Activated CD8-positive, alpha-beta T cell treated with anti-CD3 and anti-CD28 coated beads for 36 hours (primary cell): ENCODE measurements at regions of chr1 and their contacts with region 1.

Region 1: DNA sequence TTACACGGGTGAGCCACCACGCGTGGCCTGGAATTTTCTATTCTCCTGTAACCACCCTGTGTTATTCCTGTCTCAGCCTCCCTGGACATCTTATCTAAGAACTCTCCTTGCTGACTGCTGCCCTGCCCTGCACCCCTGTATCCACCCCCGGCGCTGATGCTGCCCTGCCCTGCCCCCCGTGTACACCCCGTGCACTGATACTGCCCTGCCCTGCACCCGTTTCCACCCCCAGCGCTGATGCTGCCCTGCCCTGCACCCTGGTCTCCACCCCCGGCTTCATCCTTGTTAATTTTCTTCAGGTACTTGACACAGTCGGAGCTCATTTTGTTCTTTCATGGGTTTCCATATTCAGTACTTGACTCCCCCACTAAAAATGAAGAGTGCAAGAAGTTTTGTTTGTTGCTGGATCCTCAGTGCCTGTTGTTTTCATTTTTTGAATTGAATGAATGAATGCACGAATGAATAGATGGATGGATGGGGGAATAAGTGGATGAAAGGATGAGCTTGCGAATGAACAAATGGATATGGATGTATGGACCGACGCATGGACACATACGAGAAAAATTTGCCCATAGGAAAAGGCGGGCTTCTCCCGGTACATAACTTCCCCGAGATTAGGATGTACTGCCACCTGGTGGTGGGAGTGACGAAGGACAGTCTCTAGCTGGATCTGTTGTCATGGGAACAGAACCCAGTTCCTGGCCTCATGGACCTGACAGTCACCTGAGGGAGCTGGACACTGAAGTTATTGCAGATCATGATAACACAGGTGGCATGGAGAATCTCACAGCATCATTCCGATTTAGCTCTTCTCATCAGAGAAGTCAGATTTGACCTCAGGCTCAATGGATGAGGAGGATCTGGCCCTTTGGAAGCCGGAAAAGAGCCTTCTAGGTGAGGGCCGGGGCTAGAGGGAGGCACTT is 14.9 kb downstream of the AADACL4 start:
- DNase-seq: peak; percentile 78
- ATAC-seq: peak; percentile 90
- H3K4me3 Mint-ChIP-seq: peak overlapping the region; percentile 22
- H3K27ac Mint-ChIP-seq: no peak overlapping the region
- H3K4me1 Mint-ChIP-seq: peaks cover 7% of the 10 kb centered on the region
- H3K27me3 Mint-ChIP-seq: peaks cover 6% of the 10 kb centered on the region
- CTCF ChIP-seq: peak; percentile 97

Region 2: DNA sequence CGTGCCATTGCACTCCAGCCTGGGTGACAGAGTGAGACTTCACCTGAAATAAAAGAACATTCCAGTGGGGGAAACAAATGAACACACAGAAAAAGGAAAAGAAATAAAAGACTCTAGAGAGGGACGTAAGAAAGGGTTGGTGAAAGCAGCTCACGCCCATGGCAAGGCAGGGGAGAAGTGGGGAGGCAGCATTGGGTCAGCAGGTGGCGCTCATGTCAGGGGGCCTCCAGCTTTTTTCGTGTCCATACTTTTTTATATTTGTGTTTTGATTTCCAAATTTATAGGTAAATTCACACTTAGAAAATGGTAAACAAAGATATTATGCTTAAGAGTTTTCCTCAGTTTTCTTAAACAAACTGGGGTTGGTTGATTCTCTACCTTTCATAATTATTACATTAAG is 383.4 kb before region 1 on chr1:
- CTCF ChIA-PET with region 1: interaction called, 128 read pairs
- POLR2A ChIA-PET with region 1: no interaction called
- intact Hi-C with region 1: loop called (anchors 10 kb)
- DNase-seq: peak; percentile 63
- ATAC-seq: no peak
- H3K4me3 Mint-ChIP-seq: no peak overlapping the region
- H3K27ac Mint-ChIP-seq: no peak overlapping the region
- H3K4me1 Mint-ChIP-seq: no peaks in the 10 kb centered on the region
- H3K27me3 Mint-ChIP-seq: no peaks in the 10 kb centered on the region
- CTCF ChIP-seq: peak; percentile 74

Region 3: GRCh38 chr1:12314333-12314903 is 344.4 kb before region 1 on chr1:
- CTCF ChIA-PET with region 1: interaction called, 54 read pairs
- POLR2A ChIA-PET with region 1: no interaction called
- intact Hi-C with region 1: loop called (anchors 10 kb)
- DNase-seq: no peak
- ATAC-seq: peak; percentile 51
- H3K4me3 Mint-ChIP-seq: no peak overlapping the region
- H3K27ac Mint-ChIP-seq: no peak overlapping the region
- H3K4me1 Mint-ChIP-seq: no peaks in the 10 kb centered on the region
- H3K27me3 Mint-ChIP-seq: no peaks in the 10 kb centered on the region
- CTCF ChIP-seq: peak; percentile 73

Region 4: DNA sequence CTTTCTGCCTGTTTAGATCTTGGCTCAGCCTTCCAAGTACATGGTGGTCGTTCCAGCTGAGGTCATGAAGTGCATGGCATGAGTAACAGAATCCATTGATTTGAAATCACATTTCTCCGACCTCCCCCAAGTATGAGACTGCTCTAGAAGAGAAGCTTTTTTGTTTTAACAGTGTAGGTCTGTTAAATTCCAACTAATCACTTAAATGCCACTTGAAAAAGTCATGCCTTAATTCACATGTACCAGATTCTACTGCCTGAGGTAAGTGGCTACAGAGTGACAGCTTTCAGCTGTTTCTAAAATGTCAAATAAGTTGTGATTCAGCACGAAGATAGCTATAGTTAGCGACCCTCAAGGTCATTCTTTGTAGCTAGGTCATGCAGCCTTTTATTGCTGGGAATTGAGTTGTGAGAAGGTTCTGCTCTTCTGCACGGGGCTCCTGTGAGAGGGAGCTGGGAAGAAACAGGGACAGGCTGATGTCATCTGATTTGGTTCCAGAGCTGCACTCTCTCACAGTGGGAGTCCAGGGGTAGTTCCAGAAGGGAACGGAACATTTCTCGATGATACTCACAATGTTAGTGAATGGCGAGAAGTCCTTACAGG is 316.3 kb before region 1 on chr1:
- CTCF ChIA-PET with region 1: interaction called, 10 read pairs
- POLR2A ChIA-PET with region 1: no interaction called
- intact Hi-C with region 1: no loop called
- DNase-seq: no peak
- ATAC-seq: no peak
- H3K4me3 Mint-ChIP-seq: no peak overlapping the region
- H3K27ac Mint-ChIP-seq: peak overlapping the region; percentile 16
- H3K4me1 Mint-ChIP-seq: peaks cover 67% of the 10 kb centered on the region
- H3K27me3 Mint-ChIP-seq: no peaks in the 10 kb centered on the region
- CTCF ChIP-seq: no peak

Region 5: DNA sequence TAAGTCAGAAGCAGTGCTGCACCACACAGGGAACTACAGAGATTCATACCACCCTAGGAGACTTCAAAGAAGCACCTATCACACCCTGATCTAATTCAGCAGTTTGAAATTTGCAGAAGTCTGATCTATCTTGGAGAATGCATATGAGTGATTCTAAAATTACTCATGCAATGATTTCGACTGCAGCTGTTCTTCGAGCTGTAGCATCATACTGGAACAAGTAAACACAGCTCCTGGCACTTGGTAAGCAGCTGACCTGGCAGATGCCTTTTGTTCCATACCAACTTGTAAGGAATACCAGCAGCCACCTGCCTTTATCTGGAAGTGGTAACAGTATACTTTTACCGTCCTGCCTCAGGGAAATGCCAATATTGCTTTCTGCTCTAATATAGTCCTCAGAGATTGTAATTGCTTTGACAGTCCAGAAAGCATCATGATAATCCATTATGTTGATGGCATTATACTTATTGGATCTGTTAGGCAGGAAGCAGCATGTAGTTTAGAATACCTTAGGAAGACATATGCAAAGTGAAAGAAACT is 10.8 kb after region 1 on chr1:
- CTCF ChIA-PET with region 1: interaction called, 23 read pairs
- POLR2A ChIA-PET with region 1: interaction called, 3 read pairs
- intact Hi-C with region 1: no loop called
- DNase-seq: no peak
- ATAC-seq: no peak
- H3K4me3 Mint-ChIP-seq: no peak overlapping the region
- H3K27ac Mint-ChIP-seq: no peak overlapping the region
- H3K4me1 Mint-ChIP-seq: no peaks in the 10 kb centered on the region
- H3K27me3 Mint-ChIP-seq: peaks cover 13% of the 10 kb centered on the region
- CTCF ChIP-seq: no peak

Region 6: DNA sequence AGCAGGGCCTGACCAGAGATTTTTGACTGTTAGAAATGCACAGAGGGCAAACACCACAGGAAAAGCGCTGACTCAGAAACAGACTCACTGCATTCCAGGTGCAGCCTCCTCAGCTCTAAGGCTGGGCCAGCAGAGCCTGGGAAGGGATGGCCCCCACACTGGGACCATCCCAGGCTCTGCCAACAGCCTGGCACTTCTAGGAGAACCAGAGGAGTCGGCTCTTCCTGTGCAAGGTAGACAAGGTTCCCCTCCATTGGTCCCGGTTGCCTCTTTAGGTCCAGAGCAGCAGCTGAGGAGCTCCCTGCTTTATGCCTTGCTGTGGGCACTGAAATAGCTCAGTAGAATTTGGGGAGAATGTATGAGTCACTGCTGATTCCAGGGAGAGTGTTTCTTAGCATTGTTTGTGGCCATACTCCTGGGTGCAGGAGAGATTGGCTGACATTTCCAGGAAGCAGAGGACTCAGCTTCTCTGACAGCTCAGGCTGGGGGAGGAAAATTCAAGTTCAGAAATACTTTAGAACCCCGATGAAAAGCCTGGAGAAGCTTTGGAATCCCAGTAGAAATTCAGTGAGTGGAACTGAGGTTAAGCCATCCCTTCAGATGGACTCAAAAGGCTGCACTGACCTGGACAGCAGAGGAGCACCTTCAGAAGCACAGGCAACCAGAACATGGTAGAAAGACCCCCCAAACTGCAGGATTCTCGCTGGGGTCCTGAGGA is 152.1 kb after region 1 on chr1:
- CTCF ChIA-PET with region 1: no interaction called
- POLR2A ChIA-PET with region 1: no interaction called
- intact Hi-C with region 1: no loop called
- DNase-seq: no peak
- ATAC-seq: no peak
- H3K4me3 Mint-ChIP-seq: no peak overlapping the region
- H3K27ac Mint-ChIP-seq: no peak overlapping the region
- H3K4me1 Mint-ChIP-seq: no peaks in the 10 kb centered on the region
- H3K27me3 Mint-ChIP-seq: peaks cover 5% of the 10 kb centered on the region
- CTCF ChIP-seq: no peak